ENCODE measurements at regions of chr22 and their contacts with region 1.

Region 1: DNA sequence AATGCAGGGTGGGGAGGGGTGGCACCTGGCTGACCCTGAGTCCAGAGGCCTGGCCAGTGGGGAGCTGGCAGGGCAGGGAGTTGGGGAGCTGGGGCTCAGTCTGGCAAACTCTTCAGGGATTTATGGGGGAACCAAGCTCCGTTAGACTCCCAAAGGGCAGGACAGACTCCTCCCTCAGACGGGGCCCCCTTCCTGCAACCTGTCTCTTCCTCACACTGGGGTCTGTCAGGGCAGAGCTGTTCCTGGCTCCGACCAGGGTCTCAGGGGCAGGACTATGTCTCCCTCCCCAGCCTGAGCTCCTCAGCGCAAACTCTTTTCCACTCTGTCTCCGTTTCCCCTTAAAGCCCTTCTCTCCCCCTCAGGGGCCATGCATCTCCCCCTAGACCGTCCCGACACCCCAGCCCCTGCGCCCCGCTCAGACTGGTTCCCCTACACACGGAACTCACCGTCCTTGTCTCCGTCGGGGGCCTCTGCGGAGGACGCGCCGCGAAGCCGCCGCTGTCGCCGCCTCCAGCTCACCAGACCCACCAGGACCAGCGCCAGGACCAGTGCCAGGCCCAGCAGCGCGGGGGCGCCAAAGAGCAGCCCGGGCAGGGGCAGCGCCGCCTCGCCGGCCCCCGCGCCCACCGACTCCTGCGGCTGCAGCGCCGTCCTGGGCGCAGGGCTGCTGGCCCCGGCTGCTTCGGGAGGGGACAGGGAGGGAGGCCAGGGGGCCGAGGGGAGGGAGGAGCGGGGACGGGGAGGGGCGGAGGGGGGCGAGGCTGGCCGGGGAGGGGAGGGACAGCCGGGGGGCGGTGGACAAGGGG is 748 bp downstream of the TNFRSF13C start:
- DNase-seq: peak; percentile 59 to 88 (median 76)
- ATAC-seq: peak; percentile 84
- H3K4me3 ChIP-seq: peak overlapping the region; percentile 45
- H3K4me3 Mint-ChIP-seq: peak overlapping the region; percentile 80
- H3K27ac ChIP-seq: no peak overlapping the region
- H3K27ac Mint-ChIP-seq: peak overlapping the region; percentile 55
- H3K4me1 ChIP-seq: peaks cover 30% of the 10 kb centered on the region
- H3K4me1 Mint-ChIP-seq: peaks cover 7% of the 10 kb centered on the region
- H3K27me3 ChIP-seq: peaks cover 0 to 9% of the 10 kb centered on the region in 2 experiments
- H3K27me3 Mint-ChIP-seq: peaks cover 9% of the 10 kb centered on the region
- CTCF ChIP-seq: peak; percentile 75

Region 2: GRCh38 chr22:41910050-41911000 is 15.5 kb before region 1 on chr22:
- CTCF ChIA-PET with region 1: interaction called, 15 read pairs
- POLR2A ChIA-PET with region 1: interaction called, 8 read pairs
- intact Hi-C with region 1: no loop called
- DNase-seq: peak in 8 of 14 experiments; percentile 23 to 68 (median 46)
- ATAC-seq: peak; percentile 46
- H3K4me3 ChIP-seq: peak overlapping the region; percentile 34
- H3K4me3 Mint-ChIP-seq: peak overlapping the region; percentile 66
- H3K27ac ChIP-seq: no peak overlapping the region
- H3K27ac Mint-ChIP-seq: no peak overlapping the region
- H3K4me1 ChIP-seq: peaks cover 42% of the 10 kb centered on the region
- H3K4me1 Mint-ChIP-seq: peaks cover 23% of the 10 kb centered on the region
- H3K27me3 ChIP-seq: peaks cover 36 to 41% of the 10 kb centered on the region in 2 experiments
- H3K27me3 Mint-ChIP-seq: peaks cover 44% of the 10 kb centered on the region
- CTCF ChIP-seq: no peak

Measured in CD4-positive, alpha-beta T cell (primary cell).